ENCODE measurements at regions of chr3 and their contacts with region 1.

Region 1: GRCh38 chr3:128133273-128134084 is 9.9 kb upstream of the RUVBL1 start:
- DNase-seq: peak; percentile 72
- ATAC-seq: peak; percentile 97
- H3K4me3 Mint-ChIP-seq: no peak overlapping the region
- H3K27ac Mint-ChIP-seq: peak overlapping the region; percentile 10; the same call in 1 of the 2 replicates
- H3K4me1 Mint-ChIP-seq: no peaks in the 10 kb centered on the region
- H3K27me3 Mint-ChIP-seq: peaks cover 17% of the 10 kb centered on the region
- CTCF ChIP-seq: peak; percentile 34; the same call in 1 of the 2 replicates

Region 2: GRCh38 chr3:127984241-127984975 is 149.1 kb before region 1 on chr3:
- CTCF ChIA-PET with region 1: no interaction called
- POLR2A ChIA-PET with region 1: no interaction called
- DNase-seq: no peak
- ATAC-seq: no peak
- H3K4me3 Mint-ChIP-seq: no peak overlapping the region
- H3K27ac Mint-ChIP-seq: no peak overlapping the region
- H3K4me1 Mint-ChIP-seq: no peaks in the 10 kb centered on the region
- H3K27me3 Mint-ChIP-seq: no peaks in the 10 kb centered on the region; the same call in 1 of the 2 replicates
- CTCF ChIP-seq: no peak

Region 3: GRCh38 chr3:128068211-128068620 is 65.3 kb before region 1 on chr3:
- CTCF ChIA-PET with region 1: interaction called, 26 read pairs
- POLR2A ChIA-PET with region 1: no interaction called
- DNase-seq: peak; percentile 46
- ATAC-seq: peak; percentile 61
- H3K4me3 Mint-ChIP-seq: no peak overlapping the region
- H3K27ac Mint-ChIP-seq: peak overlapping the region; percentile 78; the same call in 1 of the 2 replicates
- H3K4me1 Mint-ChIP-seq: no peaks in the 10 kb centered on the region
- H3K27me3 Mint-ChIP-seq: no peaks in the 10 kb centered on the region
- CTCF ChIP-seq: peak; percentile 41; the same call in 1 of the 2 replicates

Region 4: DNA sequence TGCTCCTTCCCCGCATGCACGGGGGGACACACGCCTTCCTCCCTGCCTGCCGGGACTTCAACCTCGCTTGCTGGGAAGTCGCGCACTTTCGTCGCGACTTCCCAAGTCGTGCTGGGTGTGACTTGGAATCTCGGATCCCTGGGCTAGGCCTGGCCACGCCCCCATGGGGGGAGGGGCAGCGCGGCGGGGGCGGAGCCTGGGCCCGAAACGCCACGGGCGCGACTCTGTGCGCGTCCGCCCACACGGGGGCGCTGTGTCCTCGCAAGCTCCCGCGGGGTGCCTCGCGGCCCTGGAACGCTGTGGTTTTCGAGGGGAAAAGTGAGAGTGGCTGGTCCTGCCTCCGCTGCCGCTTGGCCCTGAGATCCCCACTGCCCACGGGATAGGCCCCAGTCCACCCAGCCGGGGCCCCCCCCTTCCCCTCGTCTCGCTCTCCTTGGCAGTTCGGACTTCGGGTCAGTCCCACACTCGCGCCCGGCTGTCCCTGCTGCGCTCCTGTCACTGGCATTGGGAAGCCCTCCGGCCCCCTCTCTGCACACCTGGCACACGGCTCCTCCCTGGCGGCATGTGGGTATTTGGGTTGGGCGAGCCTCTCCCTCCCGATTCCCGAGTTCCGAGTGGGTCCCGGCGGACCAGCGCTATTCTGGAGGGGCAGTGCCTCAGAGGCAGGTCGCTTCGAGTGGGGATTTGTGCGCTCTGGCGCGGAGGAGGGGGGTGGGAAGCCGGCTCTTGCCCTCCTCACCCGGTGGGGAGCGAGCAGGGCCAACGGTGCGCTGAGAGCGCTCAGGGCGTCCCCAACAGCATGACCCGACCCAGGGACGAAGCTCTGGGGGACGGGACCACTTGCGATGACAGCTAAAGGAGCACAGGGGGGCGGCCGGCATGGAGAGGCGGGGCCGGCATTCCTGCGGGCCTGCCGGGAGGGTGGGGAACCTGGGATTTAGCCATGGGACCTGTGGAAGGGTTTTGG is 57.7 kb before region 1 on chr3:
- CTCF ChIA-PET with region 1: interaction called, 26 read pairs
- POLR2A ChIA-PET with region 1: no interaction called
- DNase-seq: peak; percentile 91
- ATAC-seq: peak; percentile 79
- H3K4me3 Mint-ChIP-seq: peak overlapping the region; percentile 77
- H3K27ac Mint-ChIP-seq: peak overlapping the region; percentile 91
- H3K4me1 Mint-ChIP-seq: peaks cover 12% of the 10 kb centered on the region
- H3K27me3 Mint-ChIP-seq: no peaks in the 10 kb centered on the region; the same call in 1 of the 2 replicates
- CTCF ChIP-seq: peak; percentile 94

Region 5: DNA sequence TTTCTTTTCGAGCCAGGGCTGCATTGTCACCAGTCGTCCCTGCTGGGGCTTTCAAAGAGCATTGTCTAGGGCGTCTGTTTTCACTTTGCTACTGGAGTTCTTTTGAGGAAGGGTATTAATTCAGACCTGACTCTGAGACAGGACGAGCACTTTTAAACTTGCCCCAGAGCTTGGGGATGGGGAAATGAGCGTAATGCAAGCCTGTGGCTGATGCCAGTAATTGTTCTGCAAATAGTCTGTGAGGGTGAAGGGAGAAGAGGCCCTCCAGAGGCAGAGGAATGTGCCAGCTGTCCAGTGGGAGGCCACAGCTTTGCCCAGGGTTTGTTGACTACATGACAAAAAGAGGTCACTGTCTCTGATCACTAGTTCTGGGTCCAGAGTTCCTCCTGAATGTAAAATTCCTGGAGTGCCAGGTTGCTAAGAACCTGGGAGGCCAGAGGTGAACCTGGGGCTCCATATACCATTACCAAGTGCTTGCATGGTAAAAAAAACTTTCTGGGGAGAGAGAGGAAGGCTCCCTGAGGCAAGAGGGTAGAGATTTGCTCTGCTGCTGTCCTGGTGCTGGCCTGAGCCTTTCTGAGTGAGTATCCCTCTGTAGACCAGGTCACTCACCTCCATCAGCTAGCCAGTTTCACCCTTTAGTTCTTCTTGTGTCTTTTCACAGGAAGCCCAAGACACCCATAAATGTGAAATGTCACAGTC is 34.6 kb after region 1 on chr3:
- CTCF ChIA-PET with region 1: no interaction called
- POLR2A ChIA-PET with region 1: no interaction called
- DNase-seq: no peak
- ATAC-seq: peak; percentile 55
- H3K4me3 Mint-ChIP-seq: no peak overlapping the region
- H3K27ac Mint-ChIP-seq: peak overlapping the region; percentile 7
- H3K4me1 Mint-ChIP-seq: peaks cover 22% of the 10 kb centered on the region
- H3K27me3 Mint-ChIP-seq: no peaks in the 10 kb centered on the region
- CTCF ChIP-seq: no peak

Region 6: GRCh38 chr3:128180436-128180835 is 47.0 kb after region 1 on chr3:
- CTCF ChIA-PET with region 1: no interaction called
- POLR2A ChIA-PET with region 1: no interaction called
- DNase-seq: no peak
- ATAC-seq: peak; percentile 41; the same call in 1 of the 2 replicates
- H3K4me3 Mint-ChIP-seq: no peak overlapping the region
- H3K27ac Mint-ChIP-seq: peak overlapping the region; percentile 71
- H3K4me1 Mint-ChIP-seq: peaks cover 38% of the 10 kb centered on the region
- H3K27me3 Mint-ChIP-seq: no peaks in the 10 kb centered on the region
- CTCF ChIP-seq: no peak